CD4-positive, alpha-beta memory T cell (primary cell): ENCODE measurements at regions of chr16 and their contacts with region 1.

Region 1: GRCh38 chr16:11586856-11587642 is at the start of gene LITAF:
- DNase-seq: peak; percentile 50 to 65 (median 57)
- H3K4me3 ChIP-seq: peak within 1 kb of the TSS; percentile 78 to 82
- H3K4me3 Mint-ChIP-seq: peak within 1 kb of the TSS; percentile 90 to 97 (median 96)
- H3K27ac ChIP-seq: peak within 1 kb of the TSS; percentile 73
- H3K27ac Mint-ChIP-seq: peak within 1 kb of the TSS; percentile 89 to 98 (median 95)
- H3K4me1 ChIP-seq: peaks cover 47% of the 10 kb centered on the region
- H3K4me1 Mint-ChIP-seq: peaks cover 27 to 52% (median 41%) of the 10 kb centered on the region in 4 donors
- H3K27me3 ChIP-seq: no peaks in the 10 kb centered on the region
- H3K27me3 Mint-ChIP-seq: no peaks in the 10 kb centered on the region
- total RNA-seq, gene LITAF: 155 to 157 TPM

Region 2: GRCh38 chr16:11560701-11561449 is 26.2 kb before region 1 on chr16:
- CTCF ChIA-PET with region 1: interaction called, 12 read pairs
- POLR2A ChIA-PET with region 1: interaction called, 134 read pairs
- intact Hi-C with region 1: loop called (anchors 1 kb)
- DNase-seq: peak; percentile 84 to 95 (median 86)
- H3K4me3 ChIP-seq: peak overlapping the region; percentile 37 to 60
- H3K4me3 Mint-ChIP-seq: peak overlapping the region; percentile 59 to 91 (median 79)
- H3K27ac ChIP-seq: peak overlapping the region; percentile 86
- H3K27ac Mint-ChIP-seq: peak overlapping the region; percentile 92 to 100 (median 95)
- H3K4me1 ChIP-seq: peaks cover 89% of the 10 kb centered on the region
- H3K4me1 Mint-ChIP-seq: peaks cover 54 to 91% (median 71%) of the 10 kb centered on the region in 4 donors
- H3K27me3 ChIP-seq: no peaks in the 10 kb centered on the region
- H3K27me3 Mint-ChIP-seq: no peaks in the 10 kb centered on the region

Region 3: GRCh38 chr16:11600236-11600635 is 13.2 kb after region 1 on chr16:
- CTCF ChIA-PET with region 1: interaction called, 7 read pairs
- POLR2A ChIA-PET with region 1: interaction called, 11 read pairs
- intact Hi-C with region 1: no loop called
- DNase-seq: no peak
- H3K4me3 ChIP-seq: no peak overlapping the region
- H3K4me3 Mint-ChIP-seq: no peak overlapping the region
- H3K27ac ChIP-seq: no peak overlapping the region
- H3K27ac Mint-ChIP-seq: peak overlapping the region in 2 of 7 donors; percentile 25 to 46
- H3K4me1 ChIP-seq: peaks cover 4% of the 10 kb centered on the region
- H3K4me1 Mint-ChIP-seq: peaks cover 1 to 10% (median 8%) of the 10 kb centered on the region in 4 donors
- H3K27me3 ChIP-seq: no peaks in the 10 kb centered on the region
- H3K27me3 Mint-ChIP-seq: no peaks in the 10 kb centered on the region

Region 4: DNA sequence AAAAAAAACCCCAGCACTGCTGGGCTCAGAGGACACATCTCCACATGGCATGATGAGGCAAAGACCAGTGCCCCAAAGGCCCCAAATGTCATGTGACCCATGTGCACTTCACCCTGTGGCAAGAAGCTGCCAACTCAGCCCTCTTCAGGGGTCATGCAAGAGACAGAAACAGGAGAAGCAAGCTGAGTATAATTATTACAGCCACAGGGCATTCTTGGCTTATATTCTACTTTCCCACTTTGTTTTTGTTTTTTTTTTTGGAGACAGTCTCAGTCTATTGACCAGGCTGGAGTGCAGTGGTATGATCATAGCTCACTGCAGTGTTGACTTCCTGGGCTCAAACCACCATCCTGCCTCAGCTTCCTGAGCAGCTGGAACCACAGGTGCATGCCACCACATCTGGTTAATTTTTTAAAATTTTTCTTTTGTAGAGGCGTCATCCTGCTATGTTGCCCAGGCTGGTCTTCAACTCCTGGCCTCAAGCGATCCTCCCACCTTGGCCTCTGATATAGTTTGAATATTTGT is 32.3 kb after region 1 on chr16:
- CTCF ChIA-PET with region 1: interaction called, 7 read pairs
- POLR2A ChIA-PET with region 1: interaction called, 175 read pairs
- intact Hi-C with region 1: loop called (anchors 2 kb)
- DNase-seq: peak; percentile 42 to 60 (median 57)
- H3K4me3 ChIP-seq: peak overlapping the region in 1 of 2 donors; percentile 25
- H3K4me3 Mint-ChIP-seq: peak overlapping the region; percentile 20 to 83 (median 72)
- H3K27ac ChIP-seq: peak overlapping the region; percentile 29
- H3K27ac Mint-ChIP-seq: peak overlapping the region; percentile 75 to 97 (median 93)
- H3K4me1 ChIP-seq: peaks cover 73% of the 10 kb centered on the region
- H3K4me1 Mint-ChIP-seq: peaks cover 32 to 66% (median 51%) of the 10 kb centered on the region in 4 donors
- H3K27me3 ChIP-seq: no peaks in the 10 kb centered on the region
- H3K27me3 Mint-ChIP-seq: no peaks in the 10 kb centered on the region

Region 5: GRCh38 chr16:11742539-11743307 is 155.7 kb after region 1 on chr16 and contains the start of gene TXNDC11:
- CTCF ChIA-PET with region 1: no interaction called
- POLR2A ChIA-PET with region 1: interaction called, 11 read pairs
- intact Hi-C with region 1: no loop called
- DNase-seq: peak; percentile 98 to 100 (median 99)
- H3K4me3 ChIP-seq: peak within 1 kb of the TSS; percentile 57 to 91
- H3K4me3 Mint-ChIP-seq: peak within 1 kb of the TSS; percentile 94 to 98 (median 95)
- H3K27ac ChIP-seq: peak within 1 kb of the TSS; percentile 88
- H3K27ac Mint-ChIP-seq: peak within 1 kb of the TSS; percentile 96 to 99 (median 98)
- H3K4me1 ChIP-seq: peaks cover 53% of the 10 kb centered on the region
- H3K4me1 Mint-ChIP-seq: peaks cover 39 to 60% (median 48%) of the 10 kb centered on the region in 4 donors
- H3K27me3 ChIP-seq: no peaks in the 10 kb centered on the region
- H3K27me3 Mint-ChIP-seq: no peaks in the 10 kb centered on the region
- total RNA-seq, gene TXNDC11: 51.7 to 59.8 TPM